ENCODE measurements at regions of chr18 and their contacts with region 1.

Region 1: GRCh38 chr18:48675352-48675761 is 136.5 kb downstream of the CTIF start:
- DNase-seq: peak; percentile 72 to 97
- H3K4me3 ChIP-seq: no peak overlapping the region
- H3K27ac ChIP-seq: no peak overlapping the region
- H3K4me1 ChIP-seq: peaks cover 0 to 3% (median under 1%) of the 10 kb centered on the region in 4 experiments; a peak in 2 of 7 replicates
- H3K27me3 ChIP-seq: no peaks in the 10 kb centered on the region
- CTCF ChIP-seq: peak; percentile 94 to 97 (median 96)
- EP300 ChIP-seq: no peak
- POLR2A ChIP-seq: no peak
- RAD21 ChIP-seq: peak; percentile 94 to 97

Region 2: DNA sequence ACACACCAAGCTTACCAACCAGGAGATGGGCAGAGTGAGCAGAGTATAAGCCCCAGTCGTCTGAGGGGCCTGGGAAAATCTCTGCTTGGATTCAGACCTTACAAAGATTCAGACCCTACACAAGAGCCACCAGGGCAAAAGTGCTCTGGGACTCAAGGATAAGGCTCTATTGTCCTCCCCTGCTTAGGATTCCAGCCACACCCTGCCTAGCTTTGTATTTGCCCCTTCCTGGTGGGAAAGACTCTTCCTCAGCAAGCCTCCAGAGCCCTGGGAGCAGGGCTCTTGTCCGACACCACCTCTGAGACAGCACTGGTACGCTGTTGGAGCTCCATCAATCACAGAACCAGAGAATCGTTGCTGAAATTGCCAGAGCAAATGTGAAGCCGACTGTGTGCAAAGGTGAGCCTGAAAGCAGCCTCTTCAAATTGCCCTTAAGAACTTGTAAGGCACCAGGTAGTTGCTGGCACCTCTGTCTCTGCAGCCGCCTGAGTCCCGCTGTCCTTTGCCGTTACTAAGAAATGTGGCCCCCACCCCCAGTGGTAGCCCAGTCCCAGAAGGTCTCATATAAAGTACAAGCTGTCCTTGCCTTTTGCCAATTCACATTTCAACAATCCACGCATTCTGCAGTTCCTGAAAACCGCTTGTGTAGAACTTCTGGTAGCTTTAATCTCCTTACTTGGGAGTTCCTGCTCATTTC is 12.1 kb after region 1 on chr18:
- CTCF ChIA-PET with region 1: interaction called, 27 read pairs
- POLR2A ChIA-PET with region 1: no interaction called
- DNase-seq: no peak
- H3K4me3 ChIP-seq: no peak overlapping the region
- H3K27ac ChIP-seq: no peak overlapping the region
- H3K4me1 ChIP-seq: no peaks in the 10 kb centered on the region
- H3K27me3 ChIP-seq: no peaks in the 10 kb centered on the region
- CTCF ChIP-seq: no peak
- EP300 ChIP-seq: no peak
- POLR2A ChIP-seq: no peak
- RAD21 ChIP-seq: no peak

Measured in H1 (cell line).